ENCODE measurements at regions of chr7 and their contacts with region 1.

Region 1: DNA sequence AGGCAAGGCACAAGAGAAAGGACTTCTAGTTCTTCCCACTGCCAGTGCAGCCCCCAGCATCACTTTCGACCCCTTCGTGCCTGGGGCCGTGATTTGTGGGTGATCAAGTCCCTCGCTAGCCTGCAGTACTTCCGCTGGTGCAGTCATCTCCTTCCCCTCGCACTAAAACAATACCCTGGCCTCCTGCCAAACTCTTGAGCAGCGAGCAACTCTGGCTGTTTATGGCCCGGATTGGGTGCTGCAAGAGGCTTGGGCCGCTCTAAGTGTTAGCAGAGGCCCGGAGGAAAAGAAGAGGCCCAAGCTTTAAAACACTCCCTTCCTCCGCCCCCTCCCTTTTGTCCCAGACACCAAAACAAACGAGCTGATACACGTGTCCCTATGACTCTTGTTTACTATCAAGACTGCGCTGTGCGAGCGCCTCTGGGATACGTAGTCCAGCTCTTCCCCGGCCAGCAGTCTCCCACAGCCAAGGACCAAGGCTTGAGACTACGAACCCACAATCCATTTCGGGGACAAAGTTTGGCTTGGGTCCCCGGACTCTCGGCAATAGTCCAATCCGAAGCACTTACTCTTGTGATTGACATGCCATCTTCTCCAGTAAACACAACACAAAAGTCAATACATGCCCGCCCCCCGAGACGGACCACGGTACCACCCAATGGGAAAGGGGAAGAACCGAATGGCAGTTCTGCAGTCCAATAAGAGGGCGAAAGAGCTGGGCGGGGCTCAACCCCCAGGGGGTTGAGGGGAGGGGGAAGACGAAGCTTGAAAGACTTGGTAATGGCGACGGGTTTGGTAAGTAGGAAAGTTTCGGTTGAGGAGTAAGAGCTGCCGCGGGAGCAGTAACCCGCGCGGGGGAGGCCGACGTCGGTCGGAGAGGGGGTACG is at the start of gene HBP1:
- DNase-seq: peak; percentile 99
- H3K4me3 Mint-ChIP-seq: peak within 1 kb of the TSS; percentile 97
- H3K27ac Mint-ChIP-seq: peak within 1 kb of the TSS; percentile 99
- H3K4me1 Mint-ChIP-seq: peaks cover 23% of the 10 kb centered on the region
- H3K27me3 Mint-ChIP-seq: no peaks in the 10 kb centered on the region
- total RNA-seq, gene HBP1: 41.8 to 42.2 TPM

Region 2: GRCh38 chr7:106071356-106071998 is 1097.0 kb before region 1 on chr7:
- CTCF ChIA-PET with region 1: no interaction called
- intact Hi-C with region 1: loop called (anchors 1 kb)
- DNase-seq: peak; percentile 78
- H3K4me3 Mint-ChIP-seq: peak overlapping the region; percentile 65
- H3K27ac Mint-ChIP-seq: peak overlapping the region; percentile 91
- H3K4me1 Mint-ChIP-seq: peaks cover 34% of the 10 kb centered on the region
- H3K27me3 Mint-ChIP-seq: no peaks in the 10 kb centered on the region

Region 3: GRCh38 chr7:106425017-106425719 is 743.3 kb before region 1 on chr7:
- CTCF ChIA-PET with region 1: no interaction called
- intact Hi-C with region 1: loop called (anchors 5 kb)
- DNase-seq: peak; percentile 96
- H3K4me3 Mint-ChIP-seq: peak overlapping the region; percentile 80
- H3K27ac Mint-ChIP-seq: peak overlapping the region; percentile 99
- H3K4me1 Mint-ChIP-seq: peaks cover 86% of the 10 kb centered on the region
- H3K27me3 Mint-ChIP-seq: peaks cover 3% of the 10 kb centered on the region

Region 4: GRCh38 chr7:106717955-106718871 is 450.3 kb before region 1 on chr7:
- CTCF ChIA-PET with region 1: no interaction called
- intact Hi-C with region 1: loop called (anchors 1 kb)
- DNase-seq: peak; percentile 92
- H3K4me3 Mint-ChIP-seq: no peak overlapping the region
- H3K27ac Mint-ChIP-seq: no peak overlapping the region
- H3K4me1 Mint-ChIP-seq: peaks cover 10% of the 10 kb centered on the region
- H3K27me3 Mint-ChIP-seq: no peaks in the 10 kb centered on the region

Region 5: DNA sequence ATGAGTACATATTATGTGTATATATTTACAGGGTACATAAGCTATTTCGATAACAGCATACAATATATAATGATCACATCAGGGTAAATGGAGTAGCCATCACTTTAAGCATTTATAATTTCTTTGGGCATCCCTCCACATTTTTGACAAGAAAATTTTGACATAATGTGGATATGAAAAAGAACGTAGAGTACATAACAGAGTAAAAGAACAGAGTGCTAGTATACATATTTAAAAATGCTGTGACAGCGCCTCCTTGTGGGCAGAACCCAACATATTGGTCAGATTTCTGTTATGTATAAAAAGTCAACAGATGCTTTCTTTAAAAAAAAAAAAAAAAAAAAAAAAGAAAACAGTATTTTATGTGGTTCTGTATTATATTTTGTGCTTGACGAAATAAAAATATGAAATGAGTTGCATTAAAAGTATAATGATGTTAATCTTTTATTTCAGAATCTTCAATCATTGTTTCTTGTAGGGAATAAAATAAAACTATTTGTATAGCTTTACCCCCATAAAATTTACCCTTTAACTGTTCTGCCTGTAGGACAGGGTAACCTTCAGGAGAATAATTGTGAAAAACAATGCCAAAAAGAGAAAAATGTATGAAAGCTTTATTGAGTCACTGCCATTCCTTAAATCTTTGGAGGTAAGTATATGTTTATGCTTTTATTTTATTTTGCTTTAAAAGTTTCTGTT is 18.0 kb before region 1 on chr7:
- CTCF ChIA-PET with region 1: interaction called, 15 read pairs
- intact Hi-C with region 1: no loop called
- DNase-seq: peak; percentile 91
- H3K4me3 Mint-ChIP-seq: no peak overlapping the region
- H3K27ac Mint-ChIP-seq: no peak overlapping the region
- H3K4me1 Mint-ChIP-seq: peaks cover 4% of the 10 kb centered on the region
- H3K27me3 Mint-ChIP-seq: no peaks in the 10 kb centered on the region

Region 6: DNA sequence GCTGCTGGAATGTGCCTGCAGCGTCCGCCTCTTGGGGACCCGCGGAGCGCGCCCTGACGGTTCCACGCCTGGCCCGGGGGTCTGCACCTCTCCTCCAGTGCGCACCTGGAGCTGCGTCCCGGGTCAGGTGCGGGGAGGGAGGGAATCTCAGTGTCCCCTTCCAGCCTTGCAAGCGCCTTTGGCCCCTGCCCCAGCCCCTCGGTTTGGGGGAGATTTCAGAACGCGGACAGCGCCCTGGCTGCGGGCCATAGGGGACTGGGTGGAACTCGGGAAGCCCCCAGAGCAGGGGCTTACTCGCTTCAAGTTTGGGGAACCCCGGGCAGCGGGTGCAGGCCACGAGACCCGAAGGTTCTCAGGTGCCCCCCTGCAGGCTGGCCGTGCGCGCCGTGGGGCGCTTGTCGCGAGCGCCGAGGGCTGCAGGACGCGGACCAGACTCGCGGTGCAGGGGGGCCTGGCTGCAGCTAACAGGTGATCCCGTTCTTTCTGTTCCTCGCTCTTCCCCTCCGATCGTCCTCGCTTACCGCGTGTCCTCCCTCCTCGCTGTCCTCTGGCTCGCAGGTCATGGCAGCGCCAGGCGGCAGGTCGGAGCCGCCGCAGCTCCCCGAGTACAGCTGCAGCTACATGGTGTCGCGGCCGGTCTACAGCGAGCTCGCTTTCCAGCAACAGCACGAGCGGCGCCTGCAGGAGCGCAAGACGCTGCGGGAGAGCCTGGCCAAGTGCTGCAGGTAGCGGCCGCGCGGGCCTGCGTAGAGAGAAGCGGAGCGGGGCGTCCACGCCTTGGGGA is 492.8 kb after region 1 on chr7:
- CTCF ChIA-PET with region 1: no interaction called
- intact Hi-C with region 1: loop called (anchors 1 kb)
- DNase-seq: peak; percentile 69
- H3K4me3 Mint-ChIP-seq: peak overlapping the region; percentile 86
- H3K27ac Mint-ChIP-seq: no peak overlapping the region
- H3K4me1 Mint-ChIP-seq: peaks cover 26% of the 10 kb centered on the region
- H3K27me3 Mint-ChIP-seq: peaks cover 31% of the 10 kb centered on the region

Region 7: GRCh38 chr7:107890962-107891635 is 722.6 kb after region 1 on chr7 and contains the start of gene DLD:
- CTCF ChIA-PET with region 1: no interaction called
- intact Hi-C with region 1: loop called (anchors 1 kb)
- DNase-seq: peak; percentile 96
- H3K4me3 Mint-ChIP-seq: peak within 1 kb of the TSS; percentile 100
- H3K27ac Mint-ChIP-seq: peak within 1 kb of the TSS; percentile 98
- H3K4me1 Mint-ChIP-seq: peaks cover 37% of the 10 kb centered on the region
- H3K27me3 Mint-ChIP-seq: no peaks in the 10 kb centered on the region
- total RNA-seq, gene DLD: 92.6 to 96.8 TPM

Measured in activated naive CD4-positive, alpha-beta T cell treated with anti-CD3 and anti-CD28 coated beads for 36 hours (primary cell).